ENCODE measurements at regions of chr5 and their contacts with region 1.

Region 1: DNA sequence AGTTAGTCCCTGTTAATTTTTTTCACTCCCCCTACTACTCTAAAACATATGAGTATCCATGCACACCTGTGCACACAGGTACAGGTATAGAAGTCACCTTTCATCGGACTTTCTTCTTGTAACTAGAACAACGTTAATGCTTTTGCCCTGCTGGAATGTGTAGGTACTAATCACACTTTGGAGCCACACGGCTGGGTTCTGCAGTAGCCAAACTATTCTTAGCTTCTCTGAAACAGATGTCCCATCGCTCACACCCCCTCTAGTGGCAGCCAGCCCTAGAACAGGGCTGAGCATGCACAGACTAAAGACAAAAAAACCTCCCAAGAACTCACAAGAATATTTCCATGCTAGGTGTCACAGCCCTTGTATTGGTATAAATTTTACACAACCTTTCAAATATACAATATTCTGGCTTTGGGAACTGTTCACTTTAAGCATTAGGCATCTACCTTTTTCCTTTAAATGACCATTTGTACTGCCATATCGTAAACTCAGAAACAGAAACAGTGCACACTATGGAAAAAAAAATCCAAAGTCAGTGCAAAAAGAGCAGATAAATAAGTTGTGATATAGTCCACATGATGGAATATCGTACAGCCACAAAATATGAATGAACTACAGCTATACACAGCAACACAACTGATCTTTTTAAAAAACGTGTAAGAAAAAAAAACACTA is 64.0 kb downstream of the RETREG1 start:
- DNase-seq: peak; percentile 73 to 92 (median 88)
- H3K4me3 ChIP-seq: no peak overlapping the region
- H3K27ac ChIP-seq: peak overlapping the region in 58 of 59 donors; percentile 20 to 98 (median 83)
- H3K27me3 ChIP-seq: no peaks in the 10 kb centered on the region
- CTCF ChIP-seq: peak; percentile 25 to 92 (median 78)

Region 2: DNA sequence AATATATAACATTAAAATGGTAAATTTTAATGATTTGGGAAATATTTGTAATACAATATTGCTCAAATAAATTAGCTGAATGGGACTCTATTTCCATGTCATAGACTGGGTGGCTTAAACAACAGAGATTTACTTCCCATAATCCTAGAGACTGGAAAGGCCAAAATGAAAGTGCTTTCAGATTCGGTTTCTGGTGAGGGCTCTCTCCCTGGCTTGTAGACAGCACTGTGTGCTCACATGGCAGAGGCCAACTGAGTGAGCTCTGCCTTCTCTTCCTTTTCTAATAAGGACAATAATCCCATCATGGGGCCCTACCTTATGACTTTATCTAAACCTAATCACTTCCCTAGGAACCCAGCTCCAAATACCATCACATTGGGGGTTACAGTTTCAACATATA is 569.4 kb before region 1 on chr5:
- intact Hi-C with region 1: no loop called
- DNase-seq: no peak
- H3K4me3 ChIP-seq: no peak overlapping the region
- H3K27ac ChIP-seq: no peak overlapping the region
- H3K27me3 ChIP-seq: no peaks in the 10 kb centered on the region
- CTCF ChIP-seq: no peak

Region 3: GRCh38 chr5:16489322-16489791 is 63.4 kb before region 1 on chr5:
- intact Hi-C with region 1: loop called (anchors 2 to 5 kb)
- DNase-seq: peak in 2 of 10 donors; percentile 21 to 30
- H3K4me3 ChIP-seq: no peak overlapping the region
- H3K27ac ChIP-seq: peak overlapping the region in 39 of 59 donors; percentile 0 to 77 (median 44)
- H3K27me3 ChIP-seq: no peaks in the 10 kb centered on the region
- CTCF ChIP-seq: peak; percentile 71 to 97 (median 84)

Measured in dorsolateral prefrontal cortex (tissue), 120 donors.